Aorta (tissue), 5 donors: ENCODE measurements at regions of chr16 and their contacts with region 1.

Region 1: DNA sequence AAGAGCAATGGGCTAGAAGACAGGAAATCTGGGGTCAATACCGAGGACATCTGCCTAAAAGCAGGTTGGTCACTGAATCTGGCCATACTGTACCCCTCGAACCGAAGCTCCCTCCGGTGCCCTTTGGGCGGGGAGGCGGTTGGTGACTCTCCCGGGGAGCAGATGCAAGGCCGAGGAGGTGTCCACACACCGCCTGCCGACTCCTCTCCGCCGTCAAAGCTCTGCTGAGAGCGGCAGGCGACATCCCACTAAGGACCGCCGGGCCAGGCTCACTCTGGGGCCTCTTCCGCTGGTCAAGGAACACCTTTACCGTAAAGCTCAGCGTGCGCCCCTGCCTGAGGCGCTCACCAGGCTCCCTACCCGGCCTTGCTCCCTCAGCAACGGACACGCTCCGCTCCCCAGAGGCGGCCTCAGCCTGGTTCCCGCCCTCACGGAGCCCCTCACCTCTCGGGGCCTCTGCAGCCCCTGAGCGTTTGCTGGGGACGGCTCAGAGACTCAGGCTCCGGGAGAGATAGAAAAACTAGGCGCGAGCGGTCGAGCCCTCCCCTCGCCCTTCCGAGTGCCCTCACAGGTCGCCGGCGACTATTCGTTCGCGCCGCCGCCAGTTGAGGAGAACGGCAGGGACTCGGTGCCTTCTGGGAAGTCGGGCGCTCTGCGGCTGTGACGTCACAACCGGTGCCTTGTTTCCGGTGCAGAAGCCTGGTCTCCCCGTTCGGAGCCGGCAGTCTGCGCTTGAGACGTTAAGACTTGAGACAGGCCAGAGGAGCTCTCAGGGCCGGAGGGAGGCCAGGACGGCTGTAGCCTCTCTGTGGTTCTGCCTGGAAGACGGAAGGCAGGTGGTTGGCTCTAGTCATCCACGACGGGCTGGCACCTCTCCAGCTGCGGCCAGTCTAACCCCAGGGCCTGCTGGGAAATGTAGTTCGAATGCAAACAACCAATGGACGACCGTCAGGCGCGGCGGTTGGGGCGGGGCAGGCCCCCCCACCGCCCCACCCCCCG is at the start of gene ZNF200:
- DNase-seq: peak; percentile 98 to 99
- ATAC-seq: peak; percentile 99
- H3K4me3 ChIP-seq: peak within 1 kb of the TSS; percentile 32 to 92
- H3K27ac ChIP-seq: peak within 1 kb of the TSS; percentile 18 to 91
- H3K4me1 ChIP-seq: no peaks in the 10 kb centered on the region
- H3K27me3 ChIP-seq: no peaks in the 10 kb centered on the region
- total RNA-seq, gene ZNF200: 7.4 to 8.1 TPM

Region 2: DNA sequence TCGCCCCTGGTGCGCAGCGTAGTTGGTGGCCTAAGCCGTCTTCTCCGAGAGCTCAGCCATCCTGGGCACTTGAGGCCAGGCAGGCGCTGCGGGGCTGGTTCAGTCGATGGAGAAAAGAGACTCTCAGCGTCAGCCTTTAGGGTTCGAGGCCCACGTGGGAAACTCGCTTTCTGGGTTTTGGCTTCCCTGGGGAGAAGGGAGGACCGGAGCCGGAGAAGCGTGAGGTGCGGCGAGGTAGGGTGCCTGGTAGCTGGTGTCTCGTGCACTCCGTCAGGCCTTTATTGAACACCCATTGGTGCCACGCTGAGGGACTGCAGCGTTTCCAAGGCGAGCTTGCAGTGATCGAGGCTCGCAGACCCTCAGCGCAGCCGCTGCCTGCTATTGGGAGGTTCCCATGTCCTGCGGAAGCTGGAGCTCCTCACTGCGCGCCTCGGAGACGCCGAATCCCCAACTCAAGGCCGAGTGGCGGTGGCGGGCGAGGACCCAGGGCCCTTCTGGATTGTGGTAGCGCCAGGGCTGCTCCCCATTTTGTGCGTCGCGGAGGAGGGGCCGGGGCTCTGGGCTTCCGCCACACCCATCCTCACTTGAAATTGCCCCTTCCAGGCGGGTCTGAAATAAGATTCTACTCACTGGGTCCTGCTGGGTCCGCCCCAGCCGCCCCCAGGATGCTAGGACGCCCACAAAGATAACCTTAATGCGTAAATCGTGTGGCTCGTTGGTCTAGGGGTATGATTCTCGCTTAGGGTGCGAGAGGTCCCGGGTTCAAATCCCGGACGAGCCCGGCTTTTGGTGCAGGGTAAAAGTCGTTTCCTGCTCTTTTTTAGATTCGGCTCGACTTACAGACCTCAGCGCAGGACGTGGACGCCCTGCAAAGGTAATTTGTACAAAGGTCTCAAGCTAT is 45.7 kb before region 1 on chr16:
- intact Hi-C with region 1: no loop called
- DNase-seq: no peak
- ATAC-seq: peak; percentile 59
- H3K4me3 ChIP-seq: no peak overlapping the region
- H3K27ac ChIP-seq: no peak overlapping the region
- H3K4me1 ChIP-seq: no peaks in the 10 kb centered on the region
- H3K27me3 ChIP-seq: no peaks in the 10 kb centered on the region

Region 3: DNA sequence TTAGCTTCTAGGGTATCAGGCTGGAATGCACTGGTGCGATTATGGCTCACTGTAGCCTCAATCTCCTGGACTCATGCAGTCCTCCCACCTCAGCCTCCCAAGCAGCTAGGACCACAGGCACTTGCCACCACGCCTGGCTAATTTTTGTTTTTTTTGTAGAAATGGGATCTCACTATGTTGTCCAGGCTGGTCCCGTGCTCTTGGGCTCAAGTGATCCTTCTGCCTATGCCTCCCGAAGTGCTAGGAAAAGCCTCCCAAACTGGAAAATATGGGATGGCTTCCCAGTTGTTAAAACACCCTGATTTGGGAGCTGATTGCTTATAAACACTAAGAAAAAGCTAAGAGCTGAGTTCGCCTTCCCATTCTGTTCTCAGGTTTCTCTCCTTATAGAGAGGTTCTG is 41.8 kb after region 1 on chr16:
- intact Hi-C with region 1: loop called in 1 of 2 experiments (anchors 5 kb)
- DNase-seq: no peak
- ATAC-seq: no peak
- H3K4me3 ChIP-seq: no peak overlapping the region
- H3K27ac ChIP-seq: no peak overlapping the region
- H3K4me1 ChIP-seq: no peaks in the 10 kb centered on the region
- H3K27me3 ChIP-seq: no peaks in the 10 kb centered on the region